ENCODE measurements at regions of chr7 and their contacts with region 1.

Region 1: DNA sequence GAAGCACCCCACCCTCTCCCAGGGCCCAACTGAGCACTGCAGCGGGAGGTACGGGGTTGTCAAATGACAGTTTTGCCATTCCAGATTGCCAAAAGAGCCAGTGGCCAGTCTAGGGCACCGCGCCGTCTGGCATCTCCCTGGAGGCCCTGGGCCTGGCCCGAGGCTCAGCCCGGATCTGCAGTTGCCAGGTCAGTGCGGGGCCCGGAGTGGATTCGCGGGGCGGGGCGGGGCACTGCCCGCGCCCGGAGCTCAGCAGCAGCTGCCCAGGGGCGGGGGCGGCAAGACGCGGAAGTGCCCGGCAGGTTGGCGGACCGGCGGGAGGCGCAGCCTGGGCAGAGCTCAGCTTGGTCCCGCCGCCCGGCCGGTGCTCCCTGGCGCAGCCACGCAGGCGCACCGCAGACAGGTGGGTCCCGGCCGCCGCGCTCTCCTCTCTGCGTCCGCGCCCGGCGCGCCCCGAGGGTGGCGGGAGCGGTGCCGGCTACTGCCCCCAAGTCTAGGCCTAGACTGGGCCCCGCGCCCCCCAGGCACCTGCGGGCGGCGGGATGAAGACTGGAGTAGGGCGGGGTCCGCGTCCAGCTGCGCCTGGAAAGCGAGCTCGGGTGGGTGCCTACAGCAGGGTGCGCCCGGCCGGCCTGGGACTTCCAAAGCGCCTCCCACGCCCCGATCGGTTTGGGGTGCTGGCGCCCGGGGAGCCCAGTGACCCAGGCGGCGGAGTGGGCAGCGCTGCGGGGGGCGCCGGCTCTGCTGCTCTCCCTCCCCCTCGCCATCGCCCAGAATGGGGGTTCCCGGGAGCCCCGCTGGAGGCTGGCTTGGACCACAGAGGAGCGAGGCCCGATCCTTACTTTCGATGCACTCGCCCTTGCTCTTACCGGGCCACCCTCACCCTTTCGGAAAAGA is at the start of gene IRF5:
- DNase-seq: no peak
- H3K4me3 ChIP-seq: peak within 1 kb of the TSS; percentile 48
- H3K27ac ChIP-seq: no peak within 1 kb of the TSS
- H3K4me1 ChIP-seq: no peaks in the 10 kb centered on the region
- H3K27me3 ChIP-seq: peaks cover 46% of the 10 kb centered on the region
- CTCF ChIP-seq: no peak
- total RNA-seq, gene IRF5: not detected in 2 replicates

Region 2: DNA sequence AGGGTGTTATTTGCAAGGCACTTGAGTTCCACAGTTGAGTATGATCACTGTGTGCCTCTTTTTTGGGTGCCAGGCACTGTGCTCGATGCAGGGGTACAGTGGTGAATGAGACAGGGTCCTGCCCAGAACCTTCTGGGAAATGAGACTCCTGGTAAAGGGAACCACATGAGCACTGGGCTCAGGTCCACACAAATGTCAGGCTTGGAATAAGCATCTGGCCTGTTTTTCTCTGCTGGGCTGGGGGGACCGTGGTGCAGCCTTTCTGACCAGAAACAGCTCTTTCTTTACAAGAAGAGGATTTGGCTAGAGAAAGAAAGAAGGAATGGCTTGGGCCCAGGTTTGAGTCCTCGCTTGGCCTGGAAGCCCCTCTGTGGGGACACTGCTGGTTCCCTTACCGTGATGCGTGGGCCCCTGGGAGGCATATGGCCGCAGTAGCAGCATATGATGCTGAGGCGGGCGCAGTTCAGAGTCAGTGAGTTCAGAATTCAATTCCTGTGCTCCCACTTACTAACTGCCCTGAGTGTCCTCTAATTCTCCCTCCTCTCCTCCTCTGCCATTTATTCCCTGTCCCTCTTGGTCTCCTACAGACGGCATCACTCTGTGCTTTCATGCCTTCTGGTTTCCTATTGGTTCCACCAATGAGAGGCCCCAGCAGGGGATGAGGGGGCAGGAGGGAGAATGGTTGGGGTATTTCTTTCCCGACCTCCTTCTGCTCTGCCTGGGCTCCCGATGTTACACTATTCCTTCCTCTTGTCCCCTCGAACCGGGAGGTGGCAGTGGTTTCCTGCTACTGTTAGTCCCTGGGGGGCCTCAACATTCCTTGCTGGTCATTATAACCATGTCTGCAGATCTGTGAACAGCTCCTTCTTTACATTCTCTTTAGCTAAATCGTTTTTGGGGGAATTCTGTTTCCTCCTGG is 17.8 kb before region 1 on chr7:
- CTCF ChIA-PET with region 1: no interaction called
- POLR2A ChIA-PET with region 1: no interaction called
- intact Hi-C with region 1: no loop called
- DNase-seq: peak; percentile 41
- H3K4me3 ChIP-seq: no peak overlapping the region
- H3K27ac ChIP-seq: no peak overlapping the region
- H3K4me1 ChIP-seq: no peaks in the 10 kb centered on the region
- H3K27me3 ChIP-seq: peaks cover 3% of the 10 kb centered on the region
- CTCF ChIP-seq: peak; percentile 29; the same call in 1 of the 2 replicates

Region 3: GRCh38 chr7:129030440-129030839 is 92.5 kb after region 1 on chr7:
- CTCF ChIA-PET with region 1: no interaction called
- POLR2A ChIA-PET with region 1: interaction called, 12 read pairs
- intact Hi-C with region 1: no loop called
- DNase-seq: no peak
- H3K4me3 ChIP-seq: no peak overlapping the region
- H3K27ac ChIP-seq: no peak overlapping the region
- H3K4me1 ChIP-seq: no peaks in the 10 kb centered on the region
- H3K27me3 ChIP-seq: no peaks in the 10 kb centered on the region
- CTCF ChIP-seq: no peak

Measured in A673 (cell line).